ENCODE measurements at regions of chr4 and their contacts with region 1.

Region 1: DNA sequence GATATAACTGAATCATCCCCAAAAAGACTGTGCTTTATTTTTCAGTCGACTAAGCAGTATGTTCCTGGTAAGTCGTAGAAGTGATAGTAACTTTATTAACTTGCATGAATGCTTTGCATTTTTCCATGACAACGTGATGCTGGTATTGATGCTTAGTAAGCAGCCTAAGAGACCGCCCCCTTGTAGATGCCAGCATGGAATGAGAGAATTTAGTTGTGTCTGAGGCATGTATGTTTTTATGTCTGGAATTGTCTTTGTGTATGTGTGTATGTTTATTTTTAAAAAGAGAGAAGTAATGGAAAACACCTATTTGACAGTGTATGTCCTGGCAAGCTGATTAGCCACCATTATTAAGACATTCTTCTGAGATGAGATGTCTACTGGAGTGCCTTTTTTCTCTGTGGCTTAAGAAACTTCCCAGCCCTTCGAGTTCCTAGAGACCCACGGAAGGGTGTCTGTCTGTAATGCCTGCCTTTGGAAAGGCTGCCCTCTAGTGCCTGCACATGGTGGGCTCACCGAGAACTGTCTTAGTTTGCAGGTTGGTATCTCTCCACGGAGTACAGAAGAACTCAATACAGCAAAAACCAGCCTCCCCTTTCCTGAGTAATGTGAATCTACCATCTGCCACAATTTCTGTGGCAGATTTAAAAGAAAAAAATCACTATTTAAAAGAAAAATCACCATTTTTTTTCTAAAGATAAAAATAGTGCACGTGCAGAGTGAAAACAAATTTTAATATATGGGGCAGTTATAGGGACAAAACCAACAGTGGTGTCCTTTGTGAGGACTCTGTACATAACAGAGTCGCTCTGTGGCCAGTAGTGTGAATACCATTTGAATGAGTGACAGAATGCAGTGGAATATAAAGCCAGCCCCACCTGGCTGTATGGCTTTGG is 85.9 kb downstream of the AASDH start:
- DNase-seq: peak in 5 of 6 donors; percentile 49 to 75 (median 67)
- ATAC-seq: peak; percentile 85 to 100 (median 98)
- H3K4me3 ChIP-seq: no peak overlapping the region
- H3K27ac ChIP-seq: no peak overlapping the region
- H3K4me1 ChIP-seq: no peaks in the 10 kb centered on the region
- H3K27me3 ChIP-seq: peaks cover 0 to 8% (median 0%) of the 10 kb centered on the region in 4 donors
- CTCF ChIP-seq: peak; percentile 30 to 71 (median 67)

Region 2: DNA sequence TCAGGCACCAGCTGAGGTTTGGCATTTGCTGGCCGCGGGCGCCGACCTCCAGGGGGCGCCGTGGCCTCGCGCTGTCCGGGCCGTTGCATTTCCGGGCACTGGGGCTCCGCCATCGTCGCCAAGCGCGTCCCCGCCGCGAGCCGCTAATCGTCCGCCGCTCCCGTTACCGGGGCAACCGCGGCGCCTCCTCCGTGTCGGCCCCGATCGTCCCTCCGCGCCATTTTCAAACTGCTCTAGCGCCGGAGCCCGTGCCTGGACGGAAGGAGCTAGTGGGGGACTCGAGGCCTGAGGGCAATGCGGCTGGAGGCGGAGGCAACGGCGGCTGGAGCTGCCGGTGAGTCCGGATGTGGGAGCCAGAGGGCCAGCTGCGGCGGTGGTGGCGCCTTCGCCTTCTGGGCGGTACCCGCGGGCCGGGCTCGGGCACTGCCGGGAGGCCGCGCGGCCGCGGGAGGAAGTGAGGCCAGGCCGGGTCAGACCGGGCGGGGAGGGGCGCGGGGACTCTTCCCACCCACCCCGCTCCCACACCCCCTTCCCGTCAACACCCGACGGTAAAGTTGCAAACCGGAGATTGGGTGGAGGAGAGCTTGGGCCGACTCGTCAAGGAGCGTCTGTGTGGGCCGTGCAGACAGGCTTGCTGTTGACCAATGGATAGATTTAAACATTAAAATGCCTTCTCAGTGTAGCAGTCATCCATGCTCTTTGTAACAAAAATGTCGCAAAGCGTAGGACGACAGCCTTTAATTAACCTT is 352.5 kb before region 1 on chr4 and contains the start of gene CEP135:
- intact Hi-C with region 1: loop called in 1 of 3 experiments (anchors 5 kb)
- DNase-seq: peak; percentile 94 to 97 (median 96)
- ATAC-seq: peak; percentile 95 to 100 (median 99)
- H3K4me3 ChIP-seq: peak within 1 kb of the TSS; percentile 75 to 86 (median 80)
- H3K27ac ChIP-seq: peak within 1 kb of the TSS; percentile 78 to 94 (median 90)
- H3K4me1 ChIP-seq: peaks cover 0 to 12% (median 0%) of the 10 kb centered on the region in 3 donors
- H3K27me3 ChIP-seq: no peaks in the 10 kb centered on the region
- CTCF ChIP-seq: peak; percentile 94 to 98 (median 97)
- total RNA-seq, gene CEP135: 1.3 to 4.3 (median 1.9) TPM

Measured in pancreas (tissue), 10 donors.